Caco-2 (cell line): ENCODE measurements at regions of chr3 and their contacts with region 1.

Region 1: DNA sequence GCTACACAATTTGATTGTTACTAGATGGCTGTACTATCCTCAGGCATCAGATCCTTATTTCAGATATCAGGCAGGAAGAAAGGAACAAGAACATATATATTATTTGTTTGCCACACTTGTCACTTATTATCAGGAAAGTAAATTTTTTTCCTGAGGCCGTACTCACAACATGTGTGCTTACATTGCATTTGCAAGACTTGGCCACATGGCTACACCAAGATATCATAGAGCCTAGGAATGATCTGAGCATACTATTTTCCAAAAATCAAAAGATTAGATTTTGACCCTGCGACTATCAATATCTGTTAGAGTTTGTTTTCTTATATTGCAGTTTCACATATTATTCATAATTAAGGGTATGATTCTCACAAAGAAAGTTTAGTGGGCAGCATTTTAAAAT is 426.2 kb upstream of the BCHE start:
- DNase-seq: no peak
- H3K4me3 ChIP-seq: no peak overlapping the region
- H3K4me3 Mint-ChIP-seq: no peak overlapping the region
- H3K27ac Mint-ChIP-seq: no peak overlapping the region
- H3K4me1 ChIP-seq: no peaks in the 10 kb centered on the region
- H3K4me1 Mint-ChIP-seq: no peaks in the 10 kb centered on the region
- H3K27me3 ChIP-seq: no peaks in the 10 kb centered on the region
- H3K27me3 Mint-ChIP-seq: no peaks in the 10 kb centered on the region
- CTCF ChIP-seq: no peak

Region 2: DNA sequence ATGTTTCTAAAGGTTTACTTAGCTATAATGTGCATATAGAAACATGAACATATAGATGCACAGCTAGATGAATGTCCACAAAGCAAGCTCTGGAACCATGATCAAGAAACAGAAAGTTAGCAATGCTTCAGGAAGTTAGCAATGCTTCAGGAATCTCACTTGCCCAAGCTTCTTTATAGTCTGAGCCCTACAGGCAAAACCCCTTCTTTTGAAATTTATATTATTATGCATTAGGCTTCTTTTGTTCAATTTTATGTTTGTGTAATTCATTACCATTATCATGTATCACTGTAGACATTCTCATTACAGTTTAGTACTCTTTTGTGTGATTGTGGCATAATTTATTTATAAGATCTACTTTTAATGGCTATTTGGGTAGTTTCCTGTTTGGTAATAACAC is 139.9 kb before region 1 on chr3:
- CTCF ChIA-PET with region 1: no interaction called
- POLR2A ChIA-PET with region 1: no interaction called
- intact Hi-C with region 1: no loop called
- DNase-seq: no peak
- H3K4me3 ChIP-seq: no peak overlapping the region
- H3K4me3 Mint-ChIP-seq: no peak overlapping the region
- H3K27ac Mint-ChIP-seq: no peak overlapping the region
- H3K4me1 ChIP-seq: no peaks in the 10 kb centered on the region
- H3K4me1 Mint-ChIP-seq: no peaks in the 10 kb centered on the region
- H3K27me3 ChIP-seq: no peaks in the 10 kb centered on the region
- H3K27me3 Mint-ChIP-seq: no peaks in the 10 kb centered on the region
- CTCF ChIP-seq: no peak

Region 3: GRCh38 chr3:166425899-166426575 is 162.6 kb after region 1 on chr3:
- CTCF ChIA-PET with region 1: no interaction called
- POLR2A ChIA-PET with region 1: no interaction called
- intact Hi-C with region 1: loop called (anchors 1 kb)
- DNase-seq: peak in 1 of 2 experiments; percentile 32
- H3K4me3 ChIP-seq: no peak overlapping the region
- H3K4me3 Mint-ChIP-seq: no peak overlapping the region
- H3K27ac Mint-ChIP-seq: no peak overlapping the region
- H3K4me1 ChIP-seq: no peaks in the 10 kb centered on the region
- H3K4me1 Mint-ChIP-seq: no peaks in the 10 kb centered on the region
- H3K27me3 ChIP-seq: no peaks in the 10 kb centered on the region
- H3K27me3 Mint-ChIP-seq: no peaks in the 10 kb centered on the region
- CTCF ChIP-seq: peak in 1 of 2 experiments; percentile 36

Region 4: DNA sequence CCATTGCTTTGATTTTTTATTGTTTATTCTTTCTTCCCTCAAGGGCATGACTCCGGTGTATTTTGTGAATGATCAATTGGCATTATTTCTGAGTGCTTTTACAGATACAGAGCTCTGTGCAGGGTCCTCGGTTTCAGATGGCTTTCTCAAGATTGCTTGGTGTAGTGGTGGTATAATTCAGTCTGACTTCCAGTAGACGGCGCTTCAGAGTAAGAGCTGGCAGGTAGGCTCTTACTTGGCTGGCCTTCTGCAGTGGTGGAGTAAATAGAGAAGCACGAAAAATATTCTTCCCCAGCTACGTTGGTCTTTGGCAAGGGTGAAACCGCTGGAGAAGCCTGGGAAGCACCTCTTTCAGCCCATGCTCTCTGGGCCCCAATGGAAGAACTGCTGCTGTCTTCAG is 296.8 kb after region 1 on chr3:
- CTCF ChIA-PET with region 1: no interaction called
- POLR2A ChIA-PET with region 1: no interaction called
- intact Hi-C with region 1: loop called (anchors 10 kb)
- DNase-seq: no peak
- H3K4me3 ChIP-seq: no peak overlapping the region
- H3K4me3 Mint-ChIP-seq: no peak overlapping the region
- H3K27ac Mint-ChIP-seq: no peak overlapping the region
- H3K4me1 ChIP-seq: no peaks in the 10 kb centered on the region
- H3K4me1 Mint-ChIP-seq: no peaks in the 10 kb centered on the region
- H3K27me3 ChIP-seq: no peaks in the 10 kb centered on the region
- H3K27me3 Mint-ChIP-seq: no peaks in the 10 kb centered on the region
- CTCF ChIP-seq: no peak